ENCODE measurements at regions of chr7 and their contacts with region 1.

Region 1: GRCh38 chr7:85186521-85187241 is at the start of gene SEMA3D:
- DNase-seq: no peak
- H3K4me3 ChIP-seq: peak within 1 kb of the TSS; percentile 78
- H3K27me3 ChIP-seq: no peaks in the 10 kb centered on the region
- CTCF ChIP-seq: peak; percentile 84
- polyA plus RNA-seq, gene SEMA3D: 19.9 and 27.7 TPM in 2 replicates

Region 2: GRCh38 chr7:84746353-84746752 is 440.3 kb before region 1 on chr7:
- CTCF ChIA-PET with region 1: no interaction called
- POLR2A ChIA-PET with region 1: no interaction called
- DNase-seq: peak; percentile 19
- H3K4me3 ChIP-seq: no peak overlapping the region
- H3K27me3 ChIP-seq: no peaks in the 10 kb centered on the region
- CTCF ChIP-seq: no peak

Region 3: GRCh38 chr7:85172530-85172941 is 14.1 kb before region 1 on chr7:
- CTCF ChIA-PET with region 1: interaction called, 13 read pairs
- POLR2A ChIA-PET with region 1: interaction called, 10 read pairs
- DNase-seq: peak; percentile 62
- H3K4me3 ChIP-seq: no peak overlapping the region
- H3K27me3 ChIP-seq: no peaks in the 10 kb centered on the region
- CTCF ChIP-seq: no peak

Region 4: GRCh38 chr7:85196696-85197095 is 10.0 kb after region 1 on chr7:
- CTCF ChIA-PET with region 1: interaction called, 26 read pairs
- POLR2A ChIA-PET with region 1: no interaction called
- DNase-seq: no peak
- H3K4me3 ChIP-seq: no peak overlapping the region
- H3K27me3 ChIP-seq: no peaks in the 10 kb centered on the region
- CTCF ChIP-seq: no peak

Region 5: DNA sequence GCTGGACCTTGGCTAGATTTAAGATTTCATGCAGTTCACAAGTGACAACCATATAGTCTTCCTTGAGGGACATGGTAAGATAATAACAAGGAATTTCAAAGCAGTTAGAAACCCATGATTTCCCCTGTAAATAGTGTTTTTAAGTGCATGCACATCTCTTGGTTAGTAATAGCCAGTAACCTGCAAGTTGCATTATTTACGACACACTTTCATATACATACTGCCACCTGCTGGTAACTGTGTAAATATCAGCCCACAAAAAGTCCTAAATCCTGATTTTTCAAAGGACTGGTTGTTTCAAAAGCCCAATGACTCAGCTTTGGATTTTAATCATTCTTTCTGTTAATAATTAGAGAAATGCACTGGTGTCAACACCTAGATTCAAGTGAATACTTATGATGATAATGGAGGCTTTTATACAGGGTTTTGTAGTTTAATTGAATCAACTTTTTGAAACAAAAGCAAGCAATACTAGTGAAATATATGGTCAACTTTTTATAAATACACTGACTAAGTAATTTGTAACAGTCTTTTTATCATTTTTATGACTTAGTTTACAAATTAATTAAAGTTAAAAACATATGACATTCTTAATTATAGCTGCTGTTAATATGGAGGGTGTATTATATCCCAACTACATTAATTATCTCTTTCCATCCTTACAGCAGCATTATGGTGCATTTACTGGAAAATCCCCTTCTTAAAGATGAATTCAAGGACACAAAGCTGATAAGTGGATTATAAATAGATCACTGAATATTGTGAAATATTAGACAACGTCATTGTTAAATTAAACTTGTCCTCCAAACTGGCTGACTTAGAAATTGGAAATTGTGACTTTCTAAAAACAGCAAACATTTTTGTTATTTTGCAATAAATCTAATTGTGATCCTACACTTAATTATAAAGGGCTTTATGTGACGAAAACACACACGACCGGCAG is 367.8 kb after region 1 on chr7:
- CTCF ChIA-PET with region 1: interaction called, 27 read pairs
- POLR2A ChIA-PET with region 1: no interaction called
- DNase-seq: peak; percentile 31
- H3K4me3 ChIP-seq: no peak overlapping the region
- H3K27me3 ChIP-seq: no peaks in the 10 kb centered on the region
- CTCF ChIP-seq: peak; percentile 65

Measured in BJ (cell line).